G401 (cell line): ENCODE measurements at regions of chr18 and their contacts with region 1.

Region 1: GRCh38 chr18:24584813-24585212 is 124.4 kb downstream of the HRH4 start:
- DNase-seq: peak; percentile 63

Region 2: GRCh38 chr18:24659827-24660720 is 75.3 kb after region 1 on chr18:
- in situ Hi-C with region 1: loop called (anchors 5 kb)
- DNase-seq: no peak

Region 3: DNA sequence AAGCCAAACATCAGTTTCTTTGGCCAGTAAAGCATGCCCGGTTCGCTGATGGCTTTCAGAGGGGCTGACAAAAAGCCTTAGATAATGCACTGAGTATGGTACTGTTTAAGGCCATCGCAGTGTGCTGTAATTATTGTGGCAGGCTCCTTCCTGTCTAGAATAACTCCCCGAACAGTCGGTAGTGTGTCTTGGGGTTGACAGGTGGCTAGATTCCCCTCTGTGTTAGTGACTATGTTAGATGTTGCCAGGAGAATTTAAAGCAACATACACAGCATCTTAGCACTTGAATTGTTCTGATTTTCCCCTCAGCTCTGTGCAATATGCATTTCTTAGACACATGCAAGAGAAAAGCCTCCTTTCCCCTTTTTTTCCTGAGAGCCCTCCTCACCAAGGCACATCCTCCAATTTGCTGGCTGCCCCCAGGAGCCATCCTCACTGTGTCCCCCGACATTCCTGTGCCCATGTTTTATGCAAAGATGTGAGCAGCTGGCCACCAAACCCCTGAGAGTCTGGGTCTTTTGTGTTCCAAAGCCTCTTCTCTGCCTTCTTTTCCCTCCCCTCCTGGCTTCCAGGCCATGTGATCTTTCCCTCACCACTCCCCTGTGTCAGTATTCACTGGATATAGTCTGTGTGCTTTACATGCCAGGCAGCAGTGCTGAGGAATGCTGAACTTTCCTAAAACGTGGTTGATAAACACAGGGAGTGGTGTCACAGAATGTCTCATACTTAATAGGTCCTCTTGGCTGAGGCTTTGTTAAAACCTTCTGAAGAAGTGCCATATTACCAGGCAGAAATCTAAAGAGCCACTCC is 207.1 kb after region 1 on chr18:
- in situ Hi-C with region 1: no loop called
- DNase-seq: peak; percentile 97